B cell (primary cell): ENCODE measurements at regions of chr2 and their contacts with region 1.

Region 1: DNA sequence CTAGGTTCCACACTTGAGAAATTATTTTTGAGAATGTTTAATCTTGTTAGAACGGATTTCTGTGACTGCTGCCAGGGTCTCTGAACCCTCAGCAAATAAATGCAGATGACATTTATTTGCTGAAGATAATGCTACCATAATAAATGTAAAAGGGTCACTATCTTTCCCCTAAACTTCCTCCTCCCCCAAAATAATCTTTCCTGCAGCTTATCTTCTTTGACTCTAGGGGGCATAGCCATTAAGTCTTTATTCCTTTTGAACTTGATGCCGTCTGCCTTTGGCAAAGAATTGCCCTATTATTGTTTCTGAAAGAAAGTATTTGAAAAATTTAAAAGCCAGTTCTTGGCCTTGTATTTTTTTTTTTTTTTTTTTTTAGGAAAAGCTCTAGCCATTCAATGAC is 63.6 kb upstream of the ACSL3 start:
- DNase-seq: peak; percentile 13
- ATAC-seq: no peak
- H3K4me3 ChIP-seq: no peak overlapping the region
- H3K4me3 Mint-ChIP-seq: no peak overlapping the region
- H3K27ac ChIP-seq: no peak overlapping the region
- H3K27ac Mint-ChIP-seq: no peak overlapping the region
- H3K4me1 ChIP-seq: no peaks in the 10 kb centered on the region
- H3K4me1 Mint-ChIP-seq: no peaks in the 10 kb centered on the region
- H3K27me3 ChIP-seq: no peaks in the 10 kb centered on the region
- H3K27me3 Mint-ChIP-seq: peaks cover 6% of the 10 kb centered on the region
- CTCF ChIP-seq: peak; percentile 48

Region 2: DNA sequence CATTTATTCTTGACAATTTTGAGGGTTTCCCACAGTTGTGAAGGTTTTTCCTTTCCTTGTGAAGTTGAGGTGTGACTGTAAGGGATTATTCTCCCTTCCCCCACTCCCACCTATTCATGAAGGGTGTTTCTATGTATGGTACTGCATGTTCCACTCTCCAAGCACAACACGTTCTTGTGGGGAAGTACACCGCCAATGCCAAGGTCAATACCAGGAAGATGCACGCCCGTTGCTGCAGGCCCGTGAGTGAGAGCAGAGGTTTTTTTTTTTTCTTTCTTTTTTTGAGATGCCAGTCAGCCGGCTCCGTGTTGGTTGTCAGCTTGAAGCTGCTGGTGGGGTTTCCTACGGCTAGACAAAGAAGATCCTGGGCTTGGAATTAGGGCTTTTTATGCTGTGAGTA is 1186.6 kb before region 1 on chr2:
- CTCF ChIA-PET with region 1: no interaction called
- POLR2A ChIA-PET with region 1: no interaction called
- intact Hi-C with region 1: no loop called
- DNase-seq: no peak
- ATAC-seq: no peak
- H3K4me3 ChIP-seq: no peak overlapping the region
- H3K4me3 Mint-ChIP-seq: no peak overlapping the region
- H3K27ac ChIP-seq: no peak overlapping the region
- H3K27ac Mint-ChIP-seq: no peak overlapping the region
- H3K4me1 ChIP-seq: no peaks in the 10 kb centered on the region
- H3K4me1 Mint-ChIP-seq: no peaks in the 10 kb centered on the region
- H3K27me3 ChIP-seq: no peaks in the 10 kb centered on the region
- H3K27me3 Mint-ChIP-seq: peaks cover 17% of the 10 kb centered on the region
- CTCF ChIP-seq: no peak

Region 3: DNA sequence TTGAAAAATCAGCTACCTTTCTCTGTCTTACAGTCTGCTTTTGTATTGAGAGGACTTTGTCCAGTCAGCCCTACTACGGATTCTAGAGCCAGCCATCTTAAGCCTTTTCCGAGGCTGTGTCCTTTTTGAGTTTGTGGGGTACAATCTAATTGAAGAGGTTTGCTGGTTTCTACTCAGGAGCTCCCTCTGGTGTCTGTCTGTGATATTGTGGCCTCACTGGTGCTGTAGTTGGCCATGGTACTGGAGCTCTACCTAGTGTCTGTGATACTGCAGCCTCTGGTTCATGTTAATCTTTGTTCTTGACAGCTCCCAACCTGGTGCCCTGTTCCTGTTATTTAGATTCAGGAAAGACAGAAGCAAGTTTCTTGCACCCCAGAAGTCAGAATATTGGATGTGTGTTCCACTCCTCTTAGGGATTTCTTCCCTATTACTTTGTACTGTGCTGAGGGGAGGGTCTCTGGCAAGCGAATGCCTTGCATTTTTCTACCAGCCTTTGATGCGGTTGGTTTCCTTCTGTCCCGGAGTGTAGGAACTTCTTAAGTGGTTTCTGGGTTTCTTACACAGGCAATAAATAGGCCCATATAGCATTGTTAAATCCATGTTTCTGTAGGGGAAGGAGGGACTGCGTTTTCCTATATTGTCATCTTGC is 142.1 kb after region 1 on chr2:
- CTCF ChIA-PET with region 1: no interaction called
- POLR2A ChIA-PET with region 1: no interaction called
- intact Hi-C with region 1: loop called (anchors 2 kb)
- DNase-seq: peak; percentile 66
- ATAC-seq: peak; percentile 64
- H3K4me3 ChIP-seq: no peak overlapping the region
- H3K4me3 Mint-ChIP-seq: no peak overlapping the region
- H3K27ac ChIP-seq: no peak overlapping the region
- H3K27ac Mint-ChIP-seq: no peak overlapping the region
- H3K4me1 ChIP-seq: no peaks in the 10 kb centered on the region
- H3K4me1 Mint-ChIP-seq: no peaks in the 10 kb centered on the region
- H3K27me3 ChIP-seq: no peaks in the 10 kb centered on the region
- H3K27me3 Mint-ChIP-seq: no peaks in the 10 kb centered on the region
- CTCF ChIP-seq: peak; percentile 77